CD4-positive, alpha-beta memory T cell (primary cell): ENCODE measurements at regions of chr2 and their contacts with region 1.

Region 1: DNA sequence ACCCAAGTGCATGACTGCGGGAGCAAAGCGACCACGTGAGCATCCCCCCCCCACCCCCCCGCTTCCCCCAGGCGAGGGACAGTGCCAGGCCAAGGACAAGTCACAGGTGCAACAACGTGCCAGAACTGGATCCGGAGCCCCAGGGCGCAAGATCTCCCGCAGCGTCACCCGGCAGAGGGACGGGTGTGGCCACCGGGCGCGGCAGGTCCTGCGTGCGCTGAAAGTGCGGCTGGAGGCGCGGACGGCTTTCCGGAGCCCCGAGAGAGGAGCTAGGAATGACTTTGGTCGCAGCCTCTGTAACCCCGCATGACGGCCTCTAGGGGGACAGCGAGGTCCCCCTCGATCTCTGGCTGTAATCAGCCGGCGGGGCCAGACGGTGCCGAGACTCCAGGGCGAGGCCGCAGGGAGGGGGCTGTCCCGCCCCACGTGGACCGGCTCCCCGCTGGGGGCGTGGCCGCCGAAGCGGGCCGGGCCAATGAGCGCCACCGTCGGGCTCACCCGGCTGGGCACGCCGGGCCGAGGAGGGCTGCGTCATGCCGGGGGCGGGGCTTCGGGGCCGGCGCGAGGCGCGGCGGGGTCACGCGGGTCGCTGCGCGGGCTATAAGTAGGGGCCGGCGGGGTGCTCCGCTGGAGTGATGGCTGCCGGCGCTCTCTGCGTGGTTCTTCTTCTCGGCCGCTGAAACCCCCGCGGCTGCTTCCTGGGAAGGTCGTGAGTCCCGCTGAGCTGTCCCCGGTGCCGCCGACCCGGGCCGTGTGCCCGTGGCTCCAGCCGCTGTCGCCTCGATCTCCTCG is at the start of gene SLC20A1:
- DNase-seq: peak; percentile 96 to 100 (median 99)
- H3K4me3 ChIP-seq: peak within 1 kb of the TSS; percentile 62 to 74
- H3K4me3 Mint-ChIP-seq: peak within 1 kb of the TSS; percentile 91 to 96 (median 92)
- H3K27ac ChIP-seq: peak within 1 kb of the TSS; percentile 90
- H3K27ac Mint-ChIP-seq: peak within 1 kb of the TSS; percentile 80 to 95 (median 94)
- H3K4me1 ChIP-seq: peaks cover 51% of the 10 kb centered on the region
- H3K4me1 Mint-ChIP-seq: peaks cover 36 to 62% (median 47%) of the 10 kb centered on the region in 4 donors
- H3K27me3 ChIP-seq: no peaks in the 10 kb centered on the region
- H3K27me3 Mint-ChIP-seq: no peaks in the 10 kb centered on the region
- total RNA-seq, gene SLC20A1: 93.5 to 94.0 TPM

Region 2: GRCh38 chr2:112542123-112542983 is 103.2 kb before region 1 on chr2 and contains the start of gene POLR1B:
- CTCF ChIA-PET with region 1: no interaction called
- POLR2A ChIA-PET with region 1: no interaction called
- intact Hi-C with region 1: loop called (anchors 1 kb)
- DNase-seq: peak; percentile 77 to 85 (median 81)
- H3K4me3 ChIP-seq: peak within 1 kb of the TSS; percentile 70 to 98
- H3K4me3 Mint-ChIP-seq: no peak within 1 kb of the TSS
- H3K27ac ChIP-seq: peak within 1 kb of the TSS; percentile 90
- H3K27ac Mint-ChIP-seq: no peak within 1 kb of the TSS
- H3K4me1 ChIP-seq: peaks cover 24% of the 10 kb centered on the region
- H3K4me1 Mint-ChIP-seq: peaks cover 5 to 12% (median 10%) of the 10 kb centered on the region in 4 donors
- H3K27me3 ChIP-seq: no peaks in the 10 kb centered on the region
- H3K27me3 Mint-ChIP-seq: no peaks in the 10 kb centered on the region
- total RNA-seq, gene POLR1B: 29.7 to 31.3 TPM

Region 3: DNA sequence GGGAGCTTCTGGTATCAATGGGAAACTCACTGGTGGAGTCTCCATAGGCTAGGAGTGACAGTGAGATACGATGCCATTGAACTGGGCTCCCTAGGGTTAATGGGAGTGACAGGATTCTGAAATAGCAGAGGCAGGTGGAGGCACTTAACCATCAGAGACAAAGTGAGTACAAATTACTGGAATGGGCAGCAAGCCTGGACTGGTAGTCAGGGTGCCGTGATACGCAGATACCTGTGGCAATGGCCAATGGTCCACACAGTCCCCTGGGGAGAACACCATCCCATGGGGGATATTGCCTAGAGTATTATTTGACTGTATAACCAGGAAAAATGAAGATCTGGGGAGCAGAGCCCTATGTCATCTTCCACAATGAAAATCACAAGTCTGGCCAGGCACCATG is 43.8 kb before region 1 on chr2:
- CTCF ChIA-PET with region 1: interaction called, 5 read pairs
- POLR2A ChIA-PET with region 1: interaction called, 4 read pairs
- intact Hi-C with region 1: loop called (anchors 1 kb)
- DNase-seq: no peak
- H3K4me3 ChIP-seq: no peak overlapping the region
- H3K4me3 Mint-ChIP-seq: no peak overlapping the region
- H3K27ac ChIP-seq: no peak overlapping the region
- H3K27ac Mint-ChIP-seq: peak overlapping the region in 1 of 7 donors; percentile 77
- H3K4me1 ChIP-seq: peaks cover 6% of the 10 kb centered on the region
- H3K4me1 Mint-ChIP-seq: peaks cover 4 to 5% (median 4%) of the 10 kb centered on the region in 4 donors
- H3K27me3 ChIP-seq: no peaks in the 10 kb centered on the region
- H3K27me3 Mint-ChIP-seq: no peaks in the 10 kb centered on the region

Region 4: DNA sequence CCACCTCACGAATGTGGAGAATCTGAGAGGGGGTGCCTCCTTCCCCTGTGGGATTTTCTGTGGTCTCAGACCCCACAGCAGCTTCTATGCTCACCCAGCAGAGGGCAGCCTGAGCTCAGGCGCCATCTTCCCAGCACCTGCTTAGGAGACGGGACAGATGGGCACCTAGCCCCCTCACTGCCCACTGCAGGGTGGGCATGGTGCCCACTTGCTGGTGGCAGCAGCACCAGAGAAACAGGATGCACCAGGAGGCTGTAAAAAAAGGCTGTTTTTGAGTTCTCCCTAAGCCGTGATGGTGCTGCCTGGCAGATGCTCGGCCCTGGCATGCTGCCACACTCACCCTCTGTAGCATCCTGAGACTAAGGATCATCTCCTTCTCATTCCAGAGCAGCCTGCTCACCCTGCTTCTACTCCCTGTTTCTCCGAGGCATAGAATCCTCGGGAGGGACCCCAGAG is 18.9 kb before region 1 on chr2:
- CTCF ChIA-PET with region 1: interaction called, 243 read pairs
- POLR2A ChIA-PET with region 1: interaction called, 521 read pairs
- intact Hi-C with region 1: loop called (anchors 1 kb)
- DNase-seq: peak; percentile 57 to 75 (median 63)
- H3K4me3 ChIP-seq: peak overlapping the region in 1 of 2 donors; percentile 46
- H3K4me3 Mint-ChIP-seq: peak overlapping the region; percentile 69 to 83 (median 78)
- H3K27ac ChIP-seq: peak overlapping the region; percentile 15
- H3K27ac Mint-ChIP-seq: peak overlapping the region; percentile 57 to 95 (median 85)
- H3K4me1 ChIP-seq: peaks cover 75% of the 10 kb centered on the region
- H3K4me1 Mint-ChIP-seq: peaks cover 36 to 80% (median 60%) of the 10 kb centered on the region in 4 donors
- H3K27me3 ChIP-seq: no peaks in the 10 kb centered on the region
- H3K27me3 Mint-ChIP-seq: peaks cover 0 to 3% of the 10 kb centered on the region in 2 donors

Region 5: GRCh38 chr2:112658820-112659667 is 13.5 kb after region 1 on chr2:
- CTCF ChIA-PET with region 1: interaction called, 5 read pairs
- POLR2A ChIA-PET with region 1: interaction called, 27 read pairs
- intact Hi-C with region 1: no loop called
- DNase-seq: no peak
- H3K4me3 ChIP-seq: no peak overlapping the region
- H3K4me3 Mint-ChIP-seq: peak overlapping the region in 1 of 8 donors; percentile 52
- H3K27ac ChIP-seq: no peak overlapping the region
- H3K27ac Mint-ChIP-seq: peak overlapping the region; percentile 61 to 84 (median 72)
- H3K4me1 ChIP-seq: peaks cover 32% of the 10 kb centered on the region
- H3K4me1 Mint-ChIP-seq: peaks cover 28 to 66% (median 37%) of the 10 kb centered on the region in 4 donors
- H3K27me3 ChIP-seq: no peaks in the 10 kb centered on the region
- H3K27me3 Mint-ChIP-seq: no peaks in the 10 kb centered on the region